Activated naive CD8-positive, alpha-beta T cell treated with anti-CD3 and anti-CD28 coated beads, Interleukin-2, amount 10 ng/mL, durations not matched to agents 7 days and 5 days (primary cell): ENCODE measurements at regions of chr5 and their contacts with region 1.

Region 1: GRCh38 chr5:126776497-126777256 is at the start of gene LMNB1:
- DNase-seq: peak; percentile 98
- ATAC-seq: peak; percentile 71
- H3K4me3 Mint-ChIP-seq: peak within 1 kb of the TSS; percentile 96
- H3K27ac Mint-ChIP-seq: peak within 1 kb of the TSS; percentile 99
- H3K4me1 Mint-ChIP-seq: peaks cover 17% of the 10 kb centered on the region
- H3K27me3 Mint-ChIP-seq: no peaks in the 10 kb centered on the region
- total RNA-seq, gene LMNB1: 229 to 243 TPM

Region 2: DNA sequence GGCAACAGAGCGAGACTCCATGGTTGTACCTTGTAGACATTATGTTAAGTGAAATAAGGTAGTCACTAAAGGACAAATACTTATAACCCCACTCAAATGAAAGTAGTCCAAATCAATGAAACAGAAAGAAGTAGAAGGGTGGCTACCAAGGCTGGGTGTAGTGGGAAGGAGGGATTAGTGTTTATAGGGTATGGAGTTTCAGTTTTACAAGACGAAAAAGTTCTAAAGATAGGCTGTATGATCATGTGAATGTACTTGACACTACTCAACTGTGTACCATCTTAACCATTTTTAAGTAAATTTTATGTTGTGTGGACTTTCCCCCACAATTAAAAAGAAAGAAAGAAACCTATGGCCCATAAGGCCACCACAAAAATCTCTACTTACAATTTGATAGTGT is 213.9 kb before region 1 on chr5:
- POLR2A ChIA-PET with region 1: no interaction called
- DNase-seq: no peak
- ATAC-seq: no peak
- H3K4me3 Mint-ChIP-seq: no peak overlapping the region
- H3K27ac Mint-ChIP-seq: no peak overlapping the region
- H3K4me1 Mint-ChIP-seq: no peaks in the 10 kb centered on the region
- H3K27me3 Mint-ChIP-seq: no peaks in the 10 kb centered on the region

Region 3: DNA sequence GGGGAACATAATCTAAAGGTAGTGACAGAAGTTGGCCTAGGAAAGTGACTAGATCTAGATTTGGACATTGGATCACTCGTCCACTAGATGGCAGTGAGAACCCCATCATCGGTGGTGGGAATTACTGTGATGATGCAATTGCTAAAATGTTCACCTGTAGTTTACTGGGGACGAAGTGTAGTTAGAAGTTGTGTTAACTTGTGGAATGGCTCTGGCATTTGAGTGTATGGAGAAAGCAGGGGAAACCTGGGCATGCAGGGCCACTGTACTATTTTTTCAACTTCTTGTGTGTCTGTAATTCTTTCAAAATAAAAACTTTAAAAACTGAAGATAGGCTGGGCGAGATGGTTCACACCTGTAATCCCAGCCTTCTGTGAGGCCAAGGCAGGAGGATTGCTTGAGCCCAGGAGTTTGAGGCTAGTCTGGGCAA is 100.5 kb before region 1 on chr5:
- POLR2A ChIA-PET with region 1: interaction called, 119 read pairs
- DNase-seq: no peak
- ATAC-seq: peak; percentile 79
- H3K4me3 Mint-ChIP-seq: peak overlapping the region; percentile 5
- H3K27ac Mint-ChIP-seq: peak overlapping the region; percentile 60
- H3K4me1 Mint-ChIP-seq: peaks cover 13% of the 10 kb centered on the region
- H3K27me3 Mint-ChIP-seq: peaks cover 2% of the 10 kb centered on the region

Region 4: DNA sequence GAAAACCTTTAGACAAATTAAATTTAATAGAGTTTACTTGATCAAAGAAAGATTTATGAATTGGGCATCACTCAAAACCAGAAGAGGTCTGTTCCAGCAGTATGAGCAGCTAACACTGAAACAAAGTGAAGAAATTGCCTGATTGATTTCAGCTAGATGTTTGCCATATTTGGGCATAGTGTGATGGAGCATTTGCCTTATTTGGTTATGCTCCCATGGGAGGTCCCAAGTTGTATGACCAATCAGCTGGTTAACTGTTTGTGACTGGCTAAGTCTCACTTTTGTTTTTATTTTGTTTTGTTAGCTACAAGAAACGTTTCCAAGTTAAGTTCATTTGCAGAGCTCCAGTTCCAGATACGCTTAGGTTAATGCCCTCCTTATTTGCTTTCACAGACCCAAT is 53.0 kb before region 1 on chr5:
- POLR2A ChIA-PET with region 1: interaction called, 10 read pairs
- DNase-seq: no peak
- ATAC-seq: no peak
- H3K4me3 Mint-ChIP-seq: no peak overlapping the region
- H3K27ac Mint-ChIP-seq: no peak overlapping the region
- H3K4me1 Mint-ChIP-seq: peaks cover 2% of the 10 kb centered on the region
- H3K27me3 Mint-ChIP-seq: peaks cover 2% of the 10 kb centered on the region

Region 5: DNA sequence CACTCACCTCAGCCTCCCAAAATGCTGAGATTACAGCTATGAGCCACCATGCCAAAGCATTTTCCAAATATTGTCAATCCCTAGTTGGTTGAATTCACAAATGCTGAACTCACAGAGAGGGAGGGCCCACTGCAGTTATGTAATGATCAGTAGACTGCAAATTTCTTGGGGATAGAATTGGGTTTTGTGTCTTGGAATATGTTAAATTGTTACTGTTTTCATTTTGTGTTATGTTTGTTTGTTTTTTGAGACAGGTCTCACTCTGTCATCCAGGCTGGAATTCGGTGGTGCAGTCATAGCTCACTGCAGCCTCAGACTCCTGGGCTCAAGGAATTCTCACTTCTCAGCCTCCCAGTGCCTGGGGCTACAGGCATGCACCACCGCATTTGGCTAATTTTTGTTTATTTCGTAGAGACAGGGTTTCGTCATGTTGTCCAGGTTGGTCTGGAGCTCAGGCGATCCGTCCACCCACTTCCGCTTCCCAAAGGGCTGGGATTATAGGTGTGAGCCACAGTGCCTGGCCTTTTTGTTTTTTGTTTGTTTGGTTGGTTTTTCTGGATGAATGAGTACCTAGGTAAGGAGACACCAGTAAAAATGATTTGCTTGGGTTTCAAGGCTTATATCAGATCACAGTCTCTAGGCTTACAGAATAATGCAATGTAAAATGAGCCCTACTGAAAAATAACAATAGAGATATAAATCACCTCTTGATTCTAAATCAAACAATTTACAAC is 31.3 kb before region 1 on chr5:
- POLR2A ChIA-PET with region 1: interaction called, 73 read pairs
- DNase-seq: no peak
- ATAC-seq: no peak
- H3K4me3 Mint-ChIP-seq: no peak overlapping the region
- H3K27ac Mint-ChIP-seq: no peak overlapping the region
- H3K4me1 Mint-ChIP-seq: peaks cover 15% of the 10 kb centered on the region
- H3K27me3 Mint-ChIP-seq: peaks cover 9% of the 10 kb centered on the region

Region 6: GRCh38 chr5:126852091-126852571 is 75.5 kb after region 1 on chr5:
- POLR2A ChIA-PET with region 1: interaction called, 55 read pairs
- DNase-seq: no peak
- ATAC-seq: peak; percentile 54
- H3K4me3 Mint-ChIP-seq: peak overlapping the region; percentile 87
- H3K27ac Mint-ChIP-seq: peak overlapping the region; percentile 99
- H3K4me1 Mint-ChIP-seq: peaks cover 47% of the 10 kb centered on the region
- H3K27me3 Mint-ChIP-seq: no peaks in the 10 kb centered on the region

Region 7: GRCh38 chr5:126896170-126896717 is 119.6 kb after region 1 on chr5:
- POLR2A ChIA-PET with region 1: no interaction called
- DNase-seq: no peak
- ATAC-seq: no peak
- H3K4me3 Mint-ChIP-seq: no peak overlapping the region
- H3K27ac Mint-ChIP-seq: no peak overlapping the region
- H3K4me1 Mint-ChIP-seq: no peaks in the 10 kb centered on the region
- H3K27me3 Mint-ChIP-seq: no peaks in the 10 kb centered on the region

Region 8: DNA sequence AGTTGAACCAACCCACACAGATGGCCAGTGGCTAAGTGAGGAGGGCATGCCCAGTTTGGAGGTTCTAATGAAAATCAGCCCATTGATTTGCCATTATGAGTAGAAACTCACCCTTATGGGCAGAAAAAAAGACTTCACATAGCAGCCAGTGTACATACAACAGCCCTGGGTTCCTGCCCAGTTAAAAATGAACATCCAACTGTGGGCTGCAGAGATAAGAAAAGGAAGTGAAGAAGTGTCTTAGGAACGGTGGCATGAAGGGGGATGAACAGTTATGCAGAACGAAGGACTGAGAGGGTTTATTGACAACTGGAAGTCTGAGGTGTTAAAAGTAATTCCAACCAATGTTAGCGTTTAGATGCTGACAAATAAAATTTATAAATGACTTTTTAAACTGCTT is 135.3 kb after region 1 on chr5:
- POLR2A ChIA-PET with region 1: no interaction called
- DNase-seq: no peak
- ATAC-seq: no peak
- H3K4me3 Mint-ChIP-seq: no peak overlapping the region
- H3K27ac Mint-ChIP-seq: no peak overlapping the region
- H3K4me1 Mint-ChIP-seq: no peaks in the 10 kb centered on the region
- H3K27me3 Mint-ChIP-seq: no peaks in the 10 kb centered on the region